ENCODE measurements at regions of chr18 and their contacts with region 1.

Region 1: GRCh38 chr18:62249478-62250097 is 62.5 kb downstream of the RELCH start:
- DNase-seq: peak; percentile 32
- H3K4me3 ChIP-seq: no peak overlapping the region
- H3K27ac ChIP-seq: no peak overlapping the region
- H3K4me1 ChIP-seq: no peaks in the 10 kb centered on the region; a peak in 1 of 4 replicates
- H3K27me3 ChIP-seq: no peaks in the 10 kb centered on the region
- CTCF ChIP-seq: peak; percentile 70
- EP300 ChIP-seq: no peak
- RAD21 ChIP-seq: peak; percentile 82

Region 2: GRCh38 chr18:62186774-62187542 is 62.6 kb before region 1 on chr18 and contains the starts of genes PIGN and RELCH:
- CTCF ChIA-PET with region 1: interaction called, 120 read pairs
- POLR2A ChIA-PET with region 1: no interaction called
- DNase-seq: peak; percentile 95
- H3K4me3 ChIP-seq: peak within 1 kb of the TSS; percentile 97 to 100
- H3K27ac ChIP-seq: peak within 1 kb of the TSS; percentile 66 to 89
- H3K4me1 ChIP-seq: peaks cover 9 to 17% of the 10 kb centered on the region in 2 experiments; a peak in 3 of 4 replicates
- H3K27me3 ChIP-seq: no peaks in the 10 kb centered on the region
- CTCF ChIP-seq: no peak
- EP300 ChIP-seq: no peak
- RAD21 ChIP-seq: no peak
- polyA plus RNA-seq, gene PIGN: 6.1 and 10.4 TPM in 2 replicates
- polyA plus RNA-seq, gene RELCH: 7.4 and 11.0 TPM in 2 replicates

Region 3: DNA sequence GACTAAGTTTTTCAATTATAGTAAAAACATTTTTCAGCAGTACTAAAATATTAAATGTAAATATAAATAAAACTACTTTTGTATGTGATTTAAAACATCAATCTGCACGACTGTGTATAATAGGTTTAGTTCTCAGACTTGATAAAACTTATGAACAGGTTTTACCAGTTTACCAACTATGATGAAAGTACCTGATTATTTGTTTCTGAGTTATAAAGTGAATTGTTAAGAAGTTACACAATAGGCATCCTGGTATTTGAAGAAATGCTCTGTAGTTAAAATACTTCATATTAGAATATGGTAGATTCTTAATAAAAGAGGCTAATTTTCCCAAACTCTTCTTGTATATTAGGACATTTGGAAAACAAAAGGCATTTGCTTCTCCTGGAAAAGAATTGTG is 47.7 kb before region 1 on chr18:
- CTCF ChIA-PET with region 1: interaction called, 10 read pairs
- POLR2A ChIA-PET with region 1: no interaction called
- DNase-seq: no peak
- H3K4me3 ChIP-seq: no peak overlapping the region
- H3K27ac ChIP-seq: no peak overlapping the region
- H3K4me1 ChIP-seq: no peaks in the 10 kb centered on the region; a peak in 1 of 4 replicates
- H3K27me3 ChIP-seq: no peaks in the 10 kb centered on the region
- CTCF ChIP-seq: no peak
- EP300 ChIP-seq: no peak
- RAD21 ChIP-seq: no peak